ENCODE measurements at regions of chr1 and their contacts with region 1.

Region 1: DNA sequence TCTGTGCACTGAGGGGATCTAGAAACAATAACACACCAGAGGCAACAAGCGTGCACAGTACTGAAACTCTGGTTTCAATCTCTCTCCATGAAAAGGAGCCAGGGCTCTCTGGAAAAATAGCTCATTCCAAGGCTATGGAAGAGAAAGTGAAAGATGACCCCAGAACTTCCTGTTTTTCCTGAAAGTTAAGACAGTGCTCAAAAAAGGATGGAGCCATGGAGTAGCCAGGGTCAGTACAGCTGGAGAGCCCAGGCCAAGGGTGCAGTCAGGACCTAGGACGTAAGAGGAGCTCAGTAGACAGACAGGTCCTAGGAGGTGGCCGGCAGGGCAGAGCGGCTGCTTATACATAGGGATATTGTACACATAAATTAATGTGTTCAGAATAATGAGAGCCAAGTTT is 19.1 kb downstream of the NOL9 start:
- DNase-seq: no peak
- H3K4me3 ChIP-seq: no peak overlapping the region
- H3K27ac ChIP-seq: no peak overlapping the region
- H3K4me1 ChIP-seq: no peaks in the 10 kb centered on the region
- H3K27me3 ChIP-seq: no peaks in the 10 kb centered on the region

Region 2: DNA sequence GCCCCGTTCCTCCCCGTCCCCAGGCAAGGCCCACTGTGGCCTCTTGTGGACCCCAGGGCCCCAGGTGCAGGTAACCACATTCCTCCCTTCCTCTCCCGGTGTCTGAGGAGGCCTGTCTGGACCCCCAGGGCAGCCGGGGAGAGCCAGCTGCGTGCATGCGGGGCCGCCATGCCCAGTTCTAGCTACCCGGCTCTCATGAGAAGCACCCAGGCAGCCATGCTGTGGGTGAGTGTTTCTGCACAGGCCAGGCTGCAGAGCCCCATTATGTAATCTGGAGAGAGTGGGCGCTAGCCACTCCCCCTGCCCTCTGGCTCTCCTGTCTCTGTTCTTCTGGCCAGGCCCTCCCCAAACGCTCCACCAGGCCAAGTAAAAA is 25.3 kb before region 1 on chr1:
- CTCF ChIA-PET with region 1: no interaction called
- POLR2A ChIA-PET with region 1: no interaction called
- DNase-seq: no peak
- H3K4me3 ChIP-seq: no peak overlapping the region
- H3K27ac ChIP-seq: no peak overlapping the region
- H3K4me1 ChIP-seq: peaks cover 0 to 47% (median 23%) of the 10 kb centered on the region in 4 experiments
- H3K27me3 ChIP-seq: no peaks in the 10 kb centered on the region

Region 3: GRCh38 chr1:6523566-6523965 is 11.6 kb before region 1 on chr1:
- CTCF ChIA-PET with region 1: interaction called, 13 read pairs
- POLR2A ChIA-PET with region 1: interaction called, 3 read pairs
- DNase-seq: peak; percentile 14 to 28 (median 18)
- H3K4me3 ChIP-seq: no peak overlapping the region
- H3K27ac ChIP-seq: no peak overlapping the region
- H3K4me1 ChIP-seq: no peaks in the 10 kb centered on the region
- H3K27me3 ChIP-seq: no peaks in the 10 kb centered on the region

Region 4: GRCh38 chr1:6560267-6560666 is 25.1 kb after region 1 on chr1:
- CTCF ChIA-PET with region 1: no interaction called
- POLR2A ChIA-PET with region 1: no interaction called
- DNase-seq: peak in 1 of 3 donors; percentile 22
- H3K4me3 ChIP-seq: no peak overlapping the region
- H3K27ac ChIP-seq: no peak overlapping the region
- H3K4me1 ChIP-seq: no peaks in the 10 kb centered on the region
- H3K27me3 ChIP-seq: peaks cover 0 to 2% (median 0%) of the 10 kb centered on the region in 5 experiments

Region 5: GRCh38 chr1:6579374-6580118 is 44.3 kb after region 1 on chr1 and contains the start of gene ZBTB48:
- CTCF ChIA-PET with region 1: no interaction called
- POLR2A ChIA-PET with region 1: no interaction called
- DNase-seq: peak; percentile 95 to 96 (median 96)
- H3K4me3 ChIP-seq: peak within 1 kb of the TSS; percentile 64 to 85 (median 76)
- H3K27ac ChIP-seq: peak within 1 kb of the TSS; percentile 81 to 94
- H3K4me1 ChIP-seq: peaks cover 4 to 37% (median 33%) of the 10 kb centered on the region in 4 experiments
- H3K27me3 ChIP-seq: no peaks in the 10 kb centered on the region

Region 6: DNA sequence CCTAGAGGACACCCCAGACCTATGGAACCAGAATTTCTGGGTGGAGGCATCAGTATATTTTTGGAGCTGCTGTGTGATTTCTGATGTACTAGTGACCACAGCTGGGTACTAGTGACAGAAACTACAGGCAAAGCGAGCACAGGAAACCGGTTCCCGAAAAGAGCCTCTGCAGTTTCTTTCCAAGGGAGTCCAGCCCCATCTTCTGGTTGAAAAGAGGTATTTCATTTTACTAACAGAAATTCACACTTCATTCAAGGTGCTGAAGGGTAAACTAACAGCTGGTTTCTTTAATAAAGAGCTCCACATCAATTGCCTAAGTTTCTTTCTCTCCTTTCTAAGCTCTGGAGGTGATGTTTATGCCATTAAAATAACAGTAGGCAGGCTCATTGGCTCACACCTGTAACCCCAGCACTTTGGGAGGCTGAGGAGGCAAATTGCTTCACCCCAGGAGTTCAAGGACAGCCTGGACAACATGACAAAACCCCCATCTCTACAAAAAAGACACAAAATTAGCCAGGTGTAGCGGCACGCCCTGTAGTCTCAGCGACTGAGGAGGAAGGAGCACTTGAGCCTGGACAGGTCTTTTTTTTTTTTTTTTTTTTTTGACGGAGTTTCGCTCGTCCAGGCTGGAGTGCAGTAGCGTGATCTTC is 111.4 kb after region 1 on chr1:
- CTCF ChIA-PET with region 1: no interaction called
- POLR2A ChIA-PET with region 1: no interaction called
- DNase-seq: peak; percentile 43 to 68 (median 64)
- H3K4me3 ChIP-seq: no peak overlapping the region
- H3K27ac ChIP-seq: no peak overlapping the region
- H3K4me1 ChIP-seq: no peaks in the 10 kb centered on the region
- H3K27me3 ChIP-seq: no peaks in the 10 kb centered on the region

Measured in common myeloid progenitor, CD34-positive (primary cell).